ENCODE measurements at regions of chr3 and their contacts with region 1.

Region 1: DNA sequence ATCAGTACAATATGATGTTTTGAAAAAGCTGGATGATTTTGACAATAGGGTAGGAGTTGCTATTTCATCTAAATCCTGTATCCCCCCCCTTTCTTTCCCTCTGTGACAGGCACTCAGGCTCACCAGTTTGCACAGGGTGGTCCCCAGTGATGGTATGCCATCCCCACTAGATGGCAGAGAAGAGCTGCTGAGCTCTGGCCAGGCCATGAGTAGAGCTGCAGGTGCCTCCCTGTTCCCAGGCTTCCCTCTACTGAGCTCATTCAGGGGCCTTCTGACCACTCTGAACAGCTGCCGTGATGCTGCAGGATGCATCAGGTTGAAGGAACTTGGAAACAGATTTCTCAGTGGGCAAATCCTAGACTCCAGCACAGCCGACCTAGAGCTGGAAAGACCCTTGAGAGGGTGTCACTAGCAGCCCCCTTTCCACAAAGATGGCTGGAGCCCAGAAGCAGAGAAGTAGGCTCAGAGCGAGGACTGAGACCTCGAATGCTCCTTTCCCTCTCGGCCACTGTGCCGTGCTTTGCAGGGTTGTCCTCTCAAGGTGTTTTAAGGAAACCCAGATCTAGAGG is 45.1 kb downstream of the EFCAB12 start:
- DNase-seq: peak; percentile 85
- ATAC-seq: peak; percentile 98
- H3K4me3 ChIP-seq: no peak overlapping the region
- H3K27ac ChIP-seq: no peak overlapping the region
- H3K4me1 ChIP-seq: peaks cover 7% of the 10 kb centered on the region
- H3K27me3 ChIP-seq: no peaks in the 10 kb centered on the region
- CTCF ChIP-seq: peak; percentile 90
- POLR2A ChIP-seq: peak; percentile 56; the same call in 1 of the 2 replicates
- RAD21 ChIP-seq: peak; percentile 93

Region 2: DNA sequence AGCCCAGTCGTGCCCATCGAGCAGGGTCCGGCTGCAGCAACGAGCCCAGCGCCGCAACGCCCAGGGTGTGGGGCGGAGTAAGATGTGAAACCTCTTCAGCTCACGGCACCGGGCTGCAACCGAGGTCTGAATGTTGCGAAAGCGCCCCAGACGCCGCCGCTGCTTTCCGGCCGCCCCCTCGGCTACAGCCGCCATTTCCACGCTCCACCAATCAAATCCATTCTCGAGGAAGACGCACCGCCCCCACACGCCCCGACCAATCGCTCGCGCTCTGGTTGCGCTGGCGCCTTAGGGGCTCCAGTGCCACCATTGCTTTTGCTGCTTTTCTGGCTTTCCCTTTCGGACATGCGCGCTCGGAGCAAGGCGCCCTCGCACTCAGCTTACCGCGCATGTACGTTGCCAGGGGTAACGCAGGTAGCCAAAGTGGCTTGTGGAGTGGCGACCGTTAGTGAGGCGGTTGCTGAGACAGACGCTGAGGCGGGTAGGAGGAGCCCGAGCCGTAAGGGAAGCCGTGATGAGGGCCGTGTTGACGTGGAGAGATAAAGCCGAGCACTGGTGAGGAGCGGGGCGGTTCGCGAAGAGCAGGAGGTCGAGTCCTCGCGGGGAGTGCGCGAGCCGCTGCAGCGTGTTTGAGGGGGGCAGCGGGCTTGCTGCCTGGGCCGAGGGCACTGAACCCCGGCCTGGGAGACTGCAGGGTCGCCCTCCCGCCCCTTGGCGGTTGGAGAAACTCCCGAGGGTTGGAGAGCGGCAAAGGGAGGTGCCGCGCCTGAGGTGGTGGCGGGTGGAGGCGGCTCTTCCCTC is 56.6 kb after region 1 on chr3 and contains the starts of genes IFT122 and MBD4:
- CTCF ChIA-PET with region 1: interaction called, 6 read pairs
- POLR2A ChIA-PET with region 1: no interaction called
- dilution Hi-C with region 1: no loop called
- in situ Hi-C with region 1: no loop called
- intact Hi-C with region 1: loop called (anchors 1 kb)
- DNase-seq: peak; percentile 100
- ATAC-seq: peak; percentile 93
- H3K4me3 ChIP-seq: peak within 1 kb of the TSS; percentile 68
- H3K27ac ChIP-seq: peak within 1 kb of the TSS; percentile 82
- H3K4me1 ChIP-seq: peaks cover 4% of the 10 kb centered on the region
- H3K27me3 ChIP-seq: no peaks in the 10 kb centered on the region
- CTCF ChIP-seq: no peak
- POLR2A ChIP-seq: peak; percentile 77
- RAD21 ChIP-seq: no peak
- total RNA-seq, gene IFT122: 27.2 and 28.0 TPM in 2 replicates
- total RNA-seq, gene MBD4: 13.8 and 22.2 TPM in 2 replicates

Region 3: GRCh38 chr3:129481766-129482332 is 98.5 kb after region 1 on chr3:
- CTCF ChIA-PET with region 1: interaction called, 8 read pairs
- POLR2A ChIA-PET with region 1: no interaction called
- dilution Hi-C with region 1: no loop called
- in situ Hi-C with region 1: loop called (anchors 5 kb)
- intact Hi-C with region 1: loop called (anchors 2 kb)
- DNase-seq: no peak
- ATAC-seq: no peak
- H3K4me3 ChIP-seq: no peak overlapping the region
- H3K27ac ChIP-seq: no peak overlapping the region
- H3K4me1 ChIP-seq: peaks cover 17% of the 10 kb centered on the region
- H3K27me3 ChIP-seq: no peaks in the 10 kb centered on the region
- CTCF ChIP-seq: no peak
- POLR2A ChIP-seq: no peak
- RAD21 ChIP-seq: no peak

Region 4: GRCh38 chr3:129606636-129607390 is 223.4 kb after region 1 on chr3 and contains the start of gene PLXND1:
- CTCF ChIA-PET with region 1: no interaction called
- POLR2A ChIA-PET with region 1: no interaction called
- dilution Hi-C with region 1: no loop called
- in situ Hi-C with region 1: loop called (anchors 25 kb)
- intact Hi-C with region 1: loop called (anchors 5 kb)
- DNase-seq: peak; percentile 39
- ATAC-seq: peak; percentile 71
- H3K4me3 ChIP-seq: peak within 1 kb of the TSS; percentile 95
- H3K27ac ChIP-seq: peak within 1 kb of the TSS; percentile 81
- H3K4me1 ChIP-seq: peaks cover 30% of the 10 kb centered on the region
- H3K27me3 ChIP-seq: no peaks in the 10 kb centered on the region
- CTCF ChIP-seq: no peak
- POLR2A ChIP-seq: no peak
- RAD21 ChIP-seq: no peak
- total RNA-seq, gene PLXND1: 19.2 and 22.5 TPM in 2 replicates

Region 5: DNA sequence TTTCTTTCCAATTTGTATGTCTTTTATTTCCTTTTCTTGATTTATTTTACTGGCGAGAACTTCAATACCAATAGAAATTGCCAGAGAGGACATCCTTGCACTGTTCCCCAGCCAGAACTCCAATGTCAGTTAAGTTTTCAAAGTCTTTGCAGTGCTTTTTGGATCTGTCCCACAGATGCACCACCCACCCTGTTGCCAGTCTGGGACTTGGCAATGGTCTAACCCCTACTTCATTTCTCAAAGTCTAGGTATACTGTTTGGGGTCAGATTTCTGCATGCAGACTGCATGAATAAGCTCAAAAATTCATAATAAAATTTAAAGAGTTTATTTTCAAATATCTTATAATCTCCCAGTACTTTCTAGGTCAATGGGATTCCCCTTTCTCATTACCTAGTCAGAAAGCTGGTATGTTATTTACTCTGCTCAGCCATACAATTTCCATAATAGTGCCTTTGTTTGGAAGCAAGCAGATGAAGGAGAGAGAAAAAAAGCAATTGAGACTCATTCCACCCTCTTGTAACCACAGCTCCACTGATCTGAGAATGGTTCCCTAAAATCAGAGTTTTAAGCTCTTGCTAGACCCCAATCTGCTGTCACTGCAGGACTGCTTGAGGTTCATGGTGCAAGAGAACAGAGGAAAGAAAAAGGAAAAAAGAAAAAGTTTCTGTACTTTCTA is 349.0 kb after region 1 on chr3:
- CTCF ChIA-PET with region 1: no interaction called
- POLR2A ChIA-PET with region 1: no interaction called
- dilution Hi-C with region 1: no loop called
- in situ Hi-C with region 1: no loop called
- intact Hi-C with region 1: no loop called
- DNase-seq: peak; percentile 75
- ATAC-seq: peak; percentile 82
- H3K4me3 ChIP-seq: no peak overlapping the region
- H3K27ac ChIP-seq: no peak overlapping the region
- H3K4me1 ChIP-seq: peaks cover 10% of the 10 kb centered on the region
- H3K27me3 ChIP-seq: no peaks in the 10 kb centered on the region
- CTCF ChIP-seq: no peak
- POLR2A ChIP-seq: no peak
- RAD21 ChIP-seq: no peak

Region 6: DNA sequence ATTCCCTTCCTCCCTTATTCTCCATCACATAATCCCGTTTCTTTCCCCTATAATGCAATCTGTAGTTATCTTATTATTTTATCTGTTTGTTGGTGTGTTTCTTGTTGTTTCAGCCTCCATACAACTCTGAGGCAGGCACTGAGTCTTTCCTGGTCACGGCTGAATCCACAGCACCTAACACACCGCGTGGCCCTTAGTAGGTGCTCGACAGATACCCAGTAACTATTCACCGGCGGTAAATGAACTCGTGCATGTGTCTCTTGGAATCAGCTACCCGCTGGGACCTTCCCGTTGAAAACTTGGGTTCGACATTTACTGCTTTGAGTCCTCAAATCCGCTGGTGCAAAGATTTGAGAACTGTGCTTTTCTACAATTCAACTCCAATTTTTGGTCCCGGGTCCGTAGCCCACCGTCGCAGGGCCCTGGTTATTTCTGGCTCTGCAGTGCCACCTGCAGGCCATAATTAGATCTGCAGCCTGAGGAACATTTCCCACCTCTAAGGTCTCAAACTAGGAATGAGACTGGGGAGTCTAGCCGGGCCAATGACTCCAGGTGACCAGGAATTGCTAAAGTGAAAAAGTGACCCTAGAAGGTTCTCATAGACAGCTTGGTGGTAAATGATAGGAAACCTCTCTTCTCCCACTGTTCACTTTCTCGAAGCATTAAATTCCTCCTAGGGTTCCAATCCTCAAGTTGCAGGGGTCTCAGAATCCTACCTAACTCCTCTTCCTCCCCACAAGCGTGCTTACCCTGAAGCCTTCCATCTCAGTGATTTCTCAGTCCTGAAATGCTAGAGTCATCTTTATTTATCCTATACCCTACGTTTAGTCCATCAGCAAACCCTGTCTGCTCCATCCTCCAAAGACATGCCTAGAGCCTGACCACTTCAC is 551.1 kb after region 1 on chr3:
- CTCF ChIA-PET with region 1: no interaction called
- POLR2A ChIA-PET with region 1: no interaction called
- dilution Hi-C with region 1: no loop called
- in situ Hi-C with region 1: no loop called
- intact Hi-C with region 1: loop called (anchors 2 kb)
- DNase-seq: peak; percentile 16
- ATAC-seq: peak; percentile 89
- H3K4me3 ChIP-seq: no peak overlapping the region; the same call in 1 of the 2 replicates
- H3K27ac ChIP-seq: no peak overlapping the region
- H3K4me1 ChIP-seq: 0 out of 2 replicates have a peak, but pooled peaks cover 2% of the 10 kb centered on the region
- H3K27me3 ChIP-seq: peaks cover 21% of the 10 kb centered on the region
- CTCF ChIP-seq: peak; percentile 83
- POLR2A ChIP-seq: no peak
- RAD21 ChIP-seq: peak; percentile 77

Region 7: GRCh38 chr3:130582457-130583153 is 1199.2 kb after region 1 on chr3:
- CTCF ChIA-PET with region 1: no interaction called
- POLR2A ChIA-PET with region 1: no interaction called
- dilution Hi-C with region 1: no loop called
- in situ Hi-C with region 1: no loop called
- intact Hi-C with region 1: no loop called
- DNase-seq: no peak
- ATAC-seq: no peak
- H3K4me3 ChIP-seq: no peak overlapping the region
- H3K27ac ChIP-seq: no peak overlapping the region
- H3K4me1 ChIP-seq: no peaks in the 10 kb centered on the region
- H3K27me3 ChIP-seq: peaks cover 2% of the 10 kb centered on the region
- CTCF ChIP-seq: no peak
- POLR2A ChIP-seq: no peak
- RAD21 ChIP-seq: no peak